HEK293T (cell line): ENCODE measurements at regions of chr3 and their contacts with region 1.

Region 1: DNA sequence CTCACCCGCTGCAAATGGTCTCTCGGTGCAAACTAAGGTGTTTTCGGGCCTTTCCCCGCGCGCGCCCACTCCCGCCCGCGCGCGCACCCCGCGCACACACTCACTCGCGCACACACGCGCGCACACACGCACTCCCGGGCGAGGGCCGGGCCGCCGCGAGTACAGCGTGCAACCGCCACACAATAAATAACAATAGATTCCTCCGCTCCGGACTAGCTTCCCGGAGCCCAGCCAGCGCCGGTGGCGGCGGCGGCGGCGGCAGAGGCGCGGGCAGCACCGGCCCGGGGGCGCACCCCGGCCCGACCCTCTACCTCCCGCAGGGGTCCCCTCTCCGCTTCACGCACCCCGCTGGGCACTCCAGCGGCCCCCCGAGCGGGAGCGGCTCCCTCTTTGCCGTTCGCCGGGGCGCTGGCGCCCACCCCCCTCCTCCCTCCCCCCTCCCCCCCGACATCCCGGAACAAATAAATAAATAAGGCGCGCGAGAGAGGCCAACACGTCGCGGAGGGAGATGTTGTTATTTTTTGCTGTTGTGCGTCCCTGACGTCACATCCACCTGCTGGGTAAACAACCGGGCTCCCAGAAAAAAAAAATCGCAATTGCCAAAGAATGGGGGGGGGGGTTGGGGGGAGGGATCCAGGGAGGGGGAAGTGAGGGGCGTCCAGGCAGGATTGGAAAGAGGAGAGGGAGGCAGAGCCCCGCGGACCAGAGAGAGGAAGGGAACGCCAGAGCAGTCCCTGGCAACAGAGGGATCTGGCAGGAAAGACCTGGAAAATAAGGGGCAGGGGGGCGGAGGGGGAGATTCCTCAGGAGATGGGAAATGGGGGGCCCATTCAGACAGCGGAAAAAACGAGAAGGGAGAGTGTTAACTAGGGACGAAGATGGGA is at the start of gene FOXP1:
- DNase-seq: peak; percentile 58

Region 2: DNA sequence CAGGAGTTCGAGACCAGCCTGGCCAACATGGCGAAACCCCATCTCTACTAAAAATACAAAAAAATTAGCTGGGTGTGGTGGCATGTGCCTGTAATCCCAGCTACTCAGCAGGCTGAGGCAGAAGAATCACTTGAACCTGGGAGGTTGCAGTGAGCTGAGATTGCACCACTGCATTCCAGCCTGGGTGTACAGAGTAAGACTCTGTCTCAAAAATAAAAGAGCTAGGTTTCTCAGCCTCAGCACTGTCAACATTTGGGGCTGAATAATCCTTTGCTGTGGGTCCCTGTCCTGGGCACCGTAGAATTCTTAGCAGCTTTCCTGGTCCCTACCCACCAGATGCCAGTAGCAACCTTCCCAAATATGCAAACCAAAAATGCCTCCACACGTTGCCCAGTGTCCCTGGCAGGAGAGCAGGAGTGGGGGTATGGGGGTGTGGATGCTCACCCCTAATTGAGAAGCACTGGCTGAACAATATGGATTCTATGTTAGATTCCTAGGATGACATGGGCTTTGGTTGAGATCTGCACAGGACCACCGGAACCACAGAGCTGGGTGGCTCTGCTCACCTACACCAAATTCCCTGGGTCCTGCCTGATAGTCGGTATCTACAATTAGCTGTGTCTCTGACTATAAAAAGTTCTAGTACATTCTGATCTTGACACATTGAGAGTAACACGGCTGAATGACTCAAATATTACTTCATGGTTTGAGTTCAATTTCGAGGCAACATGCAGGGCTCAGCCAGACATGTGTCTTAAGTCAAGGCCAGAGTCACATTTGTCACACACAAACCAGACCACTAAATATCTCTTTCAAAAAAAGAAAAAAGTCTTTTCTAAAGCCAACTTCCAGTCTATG is 694.4 kb before region 1 on chr3:
- CTCF ChIA-PET with region 1: no interaction called
- POLR2A ChIA-PET with region 1: no interaction called
- DNase-seq: no peak

Region 3: DNA sequence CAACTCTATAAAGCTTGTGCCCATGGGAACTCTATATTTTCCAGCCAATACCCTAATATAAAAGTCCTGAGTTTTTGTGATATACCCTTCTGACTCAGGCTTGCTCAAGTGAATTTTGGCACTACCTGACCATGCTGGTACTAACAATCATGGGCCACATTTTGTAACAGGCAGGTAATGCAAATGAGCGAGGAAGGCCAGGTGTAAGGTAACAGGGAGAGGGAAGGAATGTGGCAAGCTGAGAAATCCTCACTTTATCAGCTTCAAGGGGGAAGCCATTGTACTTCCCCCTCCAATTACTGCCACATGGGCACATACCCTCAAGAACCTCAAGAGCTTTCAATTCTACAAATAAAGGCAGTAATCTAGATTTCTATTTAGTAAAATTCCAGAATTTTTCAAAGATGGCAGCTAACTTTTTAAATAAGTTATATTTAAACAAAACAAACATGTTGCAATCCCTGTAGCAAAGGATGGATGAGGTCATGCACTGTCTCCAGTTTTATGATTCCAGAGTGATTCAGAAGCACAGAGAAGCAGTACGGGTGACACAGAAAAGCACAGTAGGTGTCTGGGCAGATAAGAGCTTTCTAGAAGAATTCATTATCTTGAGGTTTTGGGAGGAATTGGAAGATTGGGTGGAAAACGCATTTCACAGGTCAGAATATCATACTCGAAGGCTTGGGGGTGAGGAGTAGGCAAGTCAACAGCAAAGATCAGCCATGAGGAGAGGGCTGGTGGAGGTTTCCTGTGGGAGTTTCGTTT is 87.9 kb before region 1 on chr3:
- CTCF ChIA-PET with region 1: no interaction called
- POLR2A ChIA-PET with region 1: interaction called, 21 read pairs
- DNase-seq: no peak

Region 4: GRCh38 chr3:71512000-71512399 is 71.8 kb before region 1 on chr3:
- CTCF ChIA-PET with region 1: interaction called, 3 read pairs
- POLR2A ChIA-PET with region 1: interaction called, 17 read pairs
- DNase-seq: no peak

Region 5: GRCh38 chr3:71521940-71522876 is 61.6 kb before region 1 on chr3:
- CTCF ChIA-PET with region 1: no interaction called
- POLR2A ChIA-PET with region 1: interaction called, 10 read pairs
- DNase-seq: no peak

Region 6: GRCh38 chr3:71601811-71602210 is 18.0 kb after region 1 on chr3:
- CTCF ChIA-PET with region 1: no interaction called
- POLR2A ChIA-PET with region 1: no interaction called
- DNase-seq: no peak